Right cardiac atrium (tissue), 5 donors: ENCODE measurements at regions of chr2 and their contacts with region 1.

Region 1: GRCh38 chr2:28452534-28453081 is 43.3 kb upstream of the PLB1 start:
- DNase-seq: peak; percentile 75 to 92 (median 85)
- ATAC-seq: peak; percentile 82 to 86
- H3K4me3 ChIP-seq: no peak overlapping the region
- H3K27ac ChIP-seq: no peak overlapping the region
- H3K4me1 ChIP-seq: no peaks in the 10 kb centered on the region
- H3K27me3 ChIP-seq: no peaks in the 10 kb centered on the region

Region 2: GRCh38 chr2:27703638-27704341 is 748.8 kb before region 1 on chr2:
- intact Hi-C with region 1: loop called (anchors 2 to 10 kb)
- DNase-seq: peak; percentile 79 to 90 (median 84)
- ATAC-seq: peak; percentile 49 to 62
- H3K4me3 ChIP-seq: no peak overlapping the region
- H3K27ac ChIP-seq: no peak overlapping the region
- H3K4me1 ChIP-seq: no peaks in the 10 kb centered on the region
- H3K27me3 ChIP-seq: no peaks in the 10 kb centered on the region

Region 3: GRCh38 chr2:27754138-27754588 is 698.4 kb before region 1 on chr2:
- intact Hi-C with region 1: loop called in 2 of 4 experiments (anchors 10 kb)
- DNase-seq: peak; percentile 80 to 92 (median 89)
- ATAC-seq: peak; percentile 74 to 83
- H3K4me3 ChIP-seq: no peak overlapping the region
- H3K27ac ChIP-seq: no peak overlapping the region
- H3K4me1 ChIP-seq: no peaks in the 10 kb centered on the region
- H3K27me3 ChIP-seq: no peaks in the 10 kb centered on the region

Region 4: GRCh38 chr2:28377984-28378678 is 74.5 kb before region 1 on chr2:
- intact Hi-C with region 1: no loop called
- DNase-seq: peak in 2 of 3 donors; percentile 43 to 57
- ATAC-seq: peak; percentile 13 to 32
- H3K4me3 ChIP-seq: no peak overlapping the region
- H3K27ac ChIP-seq: no peak overlapping the region
- H3K4me1 ChIP-seq: no peaks in the 10 kb centered on the region
- H3K27me3 ChIP-seq: no peaks in the 10 kb centered on the region